Caco-2 (cell line): ENCODE measurements at regions of chr16 and their contacts with region 1.

Region 1: DNA sequence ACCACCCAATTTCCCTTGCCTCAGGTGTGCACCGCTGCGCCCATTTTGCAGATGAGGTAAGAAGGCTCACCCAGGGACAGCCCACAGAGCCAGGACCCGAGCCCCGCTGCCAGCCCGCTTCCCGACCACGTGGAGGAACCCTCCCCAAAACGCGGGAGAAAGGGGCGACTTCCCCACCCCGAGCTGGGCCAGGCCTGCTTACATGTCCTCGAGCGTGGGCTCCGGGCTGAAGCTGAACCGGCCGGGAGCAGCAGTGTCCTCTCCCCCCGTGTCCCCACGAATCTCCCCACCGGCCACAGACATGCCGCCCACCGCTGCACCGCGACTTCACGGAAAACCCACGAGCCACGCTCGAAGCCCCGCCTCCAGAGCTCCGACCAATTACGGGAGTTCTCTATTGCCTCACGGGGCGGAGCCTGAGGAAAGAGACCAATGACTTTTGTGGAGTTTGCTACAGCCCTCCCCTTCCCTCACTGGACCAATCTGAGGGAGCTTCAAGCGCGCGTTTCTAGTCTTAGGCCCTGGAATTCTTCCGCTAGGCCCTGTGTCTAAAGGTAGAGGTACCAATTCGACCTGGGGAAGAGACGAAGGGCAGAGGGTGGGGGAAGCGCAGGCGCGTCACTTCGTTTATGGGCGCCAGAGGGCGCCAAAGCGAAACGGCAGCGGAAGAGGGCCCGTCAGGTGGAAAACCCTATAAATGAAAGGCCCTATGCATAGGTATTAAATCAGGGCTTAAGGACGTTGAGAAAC is at the start of gene DCTPP1:
- DNase-seq: peak; percentile 94 to 98
- H3K4me3 ChIP-seq: peak within 1 kb of the TSS; percentile 67
- H3K4me3 Mint-ChIP-seq: no peak within 1 kb of the TSS
- H3K27ac Mint-ChIP-seq: no peak within 1 kb of the TSS
- H3K4me1 ChIP-seq: peaks cover 16% of the 10 kb centered on the region
- H3K4me1 Mint-ChIP-seq: no peaks in the 10 kb centered on the region
- H3K27me3 ChIP-seq: no peaks in the 10 kb centered on the region
- H3K27me3 Mint-ChIP-seq: no peaks in the 10 kb centered on the region
- CTCF ChIP-seq: peak; percentile 79 to 81
- total RNA-seq, gene DCTPP1: 51.1 and 53.2 TPM in 2 replicates

Region 2: GRCh38 chr16:30349675-30350074 is 80.2 kb before region 1 on chr16:
- CTCF ChIA-PET with region 1: no interaction called
- POLR2A ChIA-PET with region 1: no interaction called
- intact Hi-C with region 1: no loop called
- DNase-seq: no peak
- H3K4me3 ChIP-seq: no peak overlapping the region
- H3K4me3 Mint-ChIP-seq: no peak overlapping the region
- H3K27ac Mint-ChIP-seq: no peak overlapping the region
- H3K4me1 ChIP-seq: no peaks in the 10 kb centered on the region
- H3K4me1 Mint-ChIP-seq: no peaks in the 10 kb centered on the region
- H3K27me3 ChIP-seq: no peaks in the 10 kb centered on the region
- H3K27me3 Mint-ChIP-seq: no peaks in the 10 kb centered on the region
- CTCF ChIP-seq: no peak

Region 3: GRCh38 chr16:30407102-30407803 is 22.6 kb before region 1 on chr16 and contains the start of gene ZNF771:
- CTCF ChIA-PET with region 1: interaction called, 13 read pairs
- POLR2A ChIA-PET with region 1: interaction called, 5 read pairs
- intact Hi-C with region 1: no loop called
- DNase-seq: peak; percentile 89 to 92
- H3K4me3 ChIP-seq: peak within 1 kb of the TSS; percentile 87
- H3K4me3 Mint-ChIP-seq: peak within 1 kb of the TSS; percentile 87
- H3K27ac Mint-ChIP-seq: peak within 1 kb of the TSS; percentile 94
- H3K4me1 ChIP-seq: peaks cover 15% of the 10 kb centered on the region
- H3K4me1 Mint-ChIP-seq: peaks cover 7% of the 10 kb centered on the region
- H3K27me3 ChIP-seq: no peaks in the 10 kb centered on the region
- H3K27me3 Mint-ChIP-seq: no peaks in the 10 kb centered on the region
- CTCF ChIP-seq: no peak
- total RNA-seq, gene ZNF771: 4.7 and 5.8 TPM in 2 replicates

Region 4: GRCh38 chr16:30526823-30527635 is 97.2 kb after region 1 on chr16:
- CTCF ChIA-PET with region 1: interaction called, 15 read pairs
- POLR2A ChIA-PET with region 1: interaction called, 7 read pairs
- intact Hi-C with region 1: loop called (anchors 2 kb)
- DNase-seq: peak; percentile 97 to 98
- H3K4me3 ChIP-seq: peak overlapping the region; percentile 69
- H3K4me3 Mint-ChIP-seq: peak overlapping the region; percentile 82
- H3K27ac Mint-ChIP-seq: peak overlapping the region; percentile 75
- H3K4me1 ChIP-seq: peaks cover 25% of the 10 kb centered on the region
- H3K4me1 Mint-ChIP-seq: peaks cover 12% of the 10 kb centered on the region
- H3K27me3 ChIP-seq: no peaks in the 10 kb centered on the region
- H3K27me3 Mint-ChIP-seq: no peaks in the 10 kb centered on the region
- CTCF ChIP-seq: peak; percentile 36 to 43

Region 5: DNA sequence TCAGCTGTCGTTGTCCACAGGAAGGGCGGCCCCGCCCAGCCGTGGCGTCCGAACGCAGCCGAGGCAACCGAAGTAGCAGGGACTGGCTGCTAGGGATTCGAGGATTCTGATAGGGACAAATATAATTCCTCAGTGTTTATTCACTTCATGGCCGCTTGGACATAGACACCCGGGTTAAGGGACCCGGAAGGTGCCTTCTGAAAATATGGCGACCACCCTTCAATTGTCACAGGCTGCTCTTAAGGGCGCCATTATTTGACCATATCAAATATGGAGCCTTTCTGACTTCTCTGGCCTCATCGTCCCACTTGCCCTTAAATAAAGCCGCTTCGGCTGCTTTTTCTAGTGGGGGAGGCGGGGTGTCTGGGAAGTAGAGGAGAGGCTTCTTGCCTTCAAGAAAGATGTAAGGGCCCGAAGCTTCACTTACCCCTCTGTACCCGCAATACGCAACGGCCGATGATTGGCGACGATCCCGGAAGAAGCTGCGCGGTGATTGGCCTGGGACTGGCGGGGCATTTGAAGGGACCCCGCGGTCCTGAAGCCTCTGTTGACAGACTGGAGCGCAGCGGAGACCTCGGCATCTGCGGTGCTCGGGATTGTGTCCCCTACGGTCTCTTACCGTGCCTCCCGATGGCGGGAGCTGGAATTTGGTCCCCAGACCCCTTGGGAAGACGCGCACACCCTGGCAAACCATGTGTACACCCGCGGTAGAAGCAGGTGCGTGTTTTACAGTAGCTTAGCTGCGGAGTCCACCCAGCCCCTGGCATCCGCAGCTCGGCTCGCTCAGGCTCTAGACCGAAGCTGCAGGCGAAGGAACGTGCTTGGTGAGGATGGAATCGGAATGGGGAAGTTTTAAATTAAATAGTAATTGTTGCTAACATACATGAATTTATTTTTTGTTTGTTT is 142.1 kb after region 1 on chr16 and contains the start of gene ZNF688:
- CTCF ChIA-PET with region 1: interaction called, 12 read pairs
- POLR2A ChIA-PET with region 1: interaction called, 3 read pairs
- intact Hi-C with region 1: loop called (anchors 1 kb)
- DNase-seq: peak; percentile 94 to 97
- H3K4me3 ChIP-seq: peak within 1 kb of the TSS; percentile 77
- H3K4me3 Mint-ChIP-seq: peak within 1 kb of the TSS; percentile 82
- H3K27ac Mint-ChIP-seq: peak within 1 kb of the TSS; percentile 93
- H3K4me1 ChIP-seq: no peaks in the 10 kb centered on the region
- H3K4me1 Mint-ChIP-seq: peaks cover 7% of the 10 kb centered on the region
- H3K27me3 ChIP-seq: no peaks in the 10 kb centered on the region
- H3K27me3 Mint-ChIP-seq: no peaks in the 10 kb centered on the region
- CTCF ChIP-seq: no peak
- total RNA-seq, gene ZNF688: 6.2 and 10.0 TPM in 2 replicates

Region 6: DNA sequence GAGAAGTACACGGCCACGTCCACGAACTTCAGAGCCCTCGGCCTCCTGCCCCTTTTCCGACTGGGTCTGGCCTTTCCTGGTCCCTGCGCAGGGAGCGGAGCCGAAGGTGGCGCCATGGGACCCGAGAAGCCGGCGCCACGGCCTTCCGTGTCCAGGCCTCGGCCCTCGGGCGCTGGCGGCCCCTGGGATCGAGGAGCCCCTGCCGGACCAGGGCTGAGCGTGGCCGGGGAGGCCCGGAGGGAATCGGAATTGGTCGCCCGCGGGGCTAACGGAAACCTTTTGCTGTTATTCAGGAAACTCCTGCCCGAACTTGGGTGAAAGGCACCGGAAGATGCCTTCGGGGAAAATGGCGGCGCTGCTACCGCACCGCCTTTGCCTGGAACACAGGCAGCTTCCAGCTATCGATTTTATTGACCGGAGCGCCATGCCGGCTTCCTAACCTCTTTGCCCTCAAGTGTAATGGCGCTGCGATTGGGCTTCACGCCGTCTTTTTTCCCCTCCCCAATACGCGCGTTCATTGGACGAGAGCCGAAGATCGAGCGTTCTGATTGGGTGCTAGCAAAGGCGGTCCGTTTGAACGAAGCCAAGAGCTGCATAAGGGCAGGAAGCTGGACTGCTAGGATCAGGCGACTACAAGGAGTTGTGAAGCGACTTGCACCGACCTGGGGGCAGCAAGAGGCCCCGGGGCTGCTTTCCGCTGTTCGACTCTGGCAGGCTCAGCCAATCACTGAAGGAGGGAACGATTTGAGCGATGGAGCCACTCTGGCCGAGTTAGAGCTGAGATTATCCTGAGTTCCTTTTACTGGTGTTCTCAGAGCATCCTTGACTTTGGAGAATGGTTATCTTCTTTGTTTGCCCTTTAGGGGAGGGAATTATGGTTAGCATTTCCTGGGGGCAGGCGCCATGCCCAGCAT is 180.3 kb after region 1 on chr16 and contains the start of gene ZNF689:
- CTCF ChIA-PET with region 1: interaction called, 11 read pairs
- POLR2A ChIA-PET with region 1: interaction called, 9 read pairs
- intact Hi-C with region 1: no loop called
- DNase-seq: peak; percentile 95
- H3K4me3 ChIP-seq: peak within 1 kb of the TSS; percentile 77
- H3K4me3 Mint-ChIP-seq: peak within 1 kb of the TSS; percentile 79
- H3K27ac Mint-ChIP-seq: peak within 1 kb of the TSS; percentile 89
- H3K4me1 ChIP-seq: no peaks in the 10 kb centered on the region
- H3K4me1 Mint-ChIP-seq: no peaks in the 10 kb centered on the region
- H3K27me3 ChIP-seq: no peaks in the 10 kb centered on the region
- H3K27me3 Mint-ChIP-seq: no peaks in the 10 kb centered on the region
- CTCF ChIP-seq: no peak
- total RNA-seq, gene ZNF689: 11.4 and 11.7 TPM in 2 replicates

Region 7: DNA sequence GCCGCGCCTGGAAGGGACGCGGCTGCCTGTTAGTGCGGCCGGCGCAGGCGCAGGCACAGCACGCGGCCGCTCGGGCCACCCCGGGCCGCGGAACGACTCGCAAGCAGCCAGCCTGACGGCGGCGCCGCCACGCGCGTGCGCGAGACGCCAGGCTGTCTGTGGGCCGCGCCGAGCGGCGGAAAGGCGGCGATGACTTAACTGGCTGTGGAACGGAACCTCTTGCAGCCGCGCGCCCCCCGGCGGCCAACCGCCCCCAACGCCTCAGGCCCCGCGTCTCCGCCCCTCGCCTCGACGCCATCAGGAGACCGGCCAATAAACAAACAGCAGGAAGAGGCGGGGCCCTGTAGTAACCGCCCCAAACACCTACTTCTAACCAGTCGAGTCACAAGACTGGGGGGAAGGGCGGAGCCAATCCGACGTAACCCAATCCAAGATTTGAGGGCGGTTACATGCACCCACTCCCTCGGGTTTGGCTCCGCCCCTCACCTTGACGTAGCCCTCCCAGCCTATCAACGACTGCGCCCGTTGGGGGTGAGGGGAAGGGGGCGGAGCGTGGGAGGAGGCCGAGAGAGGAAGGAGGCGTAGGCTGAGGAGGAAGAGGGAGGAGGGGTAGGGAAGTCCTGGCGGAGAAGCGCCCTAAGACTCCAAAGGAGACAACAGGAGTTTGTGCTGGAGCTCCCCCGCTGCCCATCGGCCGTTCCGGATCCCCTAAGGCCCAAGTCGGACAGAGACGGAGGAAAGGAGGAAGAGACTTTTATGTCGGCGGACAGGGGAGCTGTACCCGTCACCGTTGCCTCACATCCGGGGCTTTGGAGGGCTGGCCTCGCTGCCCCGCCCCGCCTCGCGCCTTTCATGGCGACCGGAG is 228.2 kb after region 1 on chr16 and contains the start of gene FBRS:
- CTCF ChIA-PET with region 1: interaction called, 7 read pairs
- POLR2A ChIA-PET with region 1: interaction called, 5 read pairs
- intact Hi-C with region 1: loop called (anchors 1 kb)
- DNase-seq: peak; percentile 99 to 100
- H3K4me3 ChIP-seq: peak within 1 kb of the TSS; percentile 50
- H3K4me3 Mint-ChIP-seq: peak within 1 kb of the TSS; percentile 90
- H3K27ac Mint-ChIP-seq: peak within 1 kb of the TSS; percentile 96
- H3K4me1 ChIP-seq: no peaks in the 10 kb centered on the region; the same call in 1 of the 2 replicates
- H3K4me1 Mint-ChIP-seq: peaks cover 10% of the 10 kb centered on the region
- H3K27me3 ChIP-seq: no peaks in the 10 kb centered on the region
- H3K27me3 Mint-ChIP-seq: no peaks in the 10 kb centered on the region
- CTCF ChIP-seq: peak; percentile 54 to 71
- total RNA-seq, gene FBRS: 46.1 and 47.9 TPM in 2 replicates